Ascending aorta (tissue), 2 donors: ENCODE measurements at regions of chr12 and their contacts with region 1.

Region 1: DNA sequence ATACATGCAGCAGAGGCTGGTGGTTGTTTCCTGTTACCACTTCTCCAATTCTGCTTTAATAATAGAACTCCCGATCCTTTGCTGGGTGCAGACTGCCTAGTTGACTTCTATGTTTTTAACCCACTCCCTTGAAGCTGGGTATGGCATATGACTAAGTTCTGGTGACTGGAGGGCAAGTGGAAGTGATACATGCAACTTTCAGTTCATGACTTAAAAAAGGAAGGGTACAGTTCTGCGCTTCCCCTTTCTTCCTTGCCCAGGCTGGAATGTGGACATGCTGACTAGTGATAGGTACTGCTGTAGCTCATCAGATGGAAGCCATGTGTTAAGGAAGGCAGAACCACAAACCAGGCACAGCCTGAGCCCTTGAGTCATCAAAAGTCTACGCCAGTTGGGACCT is 2.4 kb upstream of the A2M start:
- DNase-seq: peak; percentile 30 to 70
- H3K4me3 ChIP-seq: peak overlapping the region; percentile 34 to 69
- H3K27ac ChIP-seq: peak overlapping the region; percentile 80 to 85
- H3K4me1 ChIP-seq: peaks cover 3 to 32% of the 10 kb centered on the region in 2 donors
- H3K27me3 ChIP-seq: no peaks in the 10 kb centered on the region
- CTCF ChIP-seq: no peak

Region 2: GRCh38 chr12:9149372-9149771 is 31.2 kb after region 1 on chr12:
- intact Hi-C with region 1: no loop called
- DNase-seq: no peak
- H3K4me3 ChIP-seq: no peak overlapping the region
- H3K27ac ChIP-seq: no peak overlapping the region
- H3K4me1 ChIP-seq: no peaks in the 10 kb centered on the region
- H3K27me3 ChIP-seq: no peaks in the 10 kb centered on the region
- CTCF ChIP-seq: no peak

Region 3: GRCh38 chr12:9276990-9277389 is 158.8 kb after region 1 on chr12:
- intact Hi-C with region 1: loop called (anchors 2 kb)
- DNase-seq: no peak
- H3K4me3 ChIP-seq: no peak overlapping the region
- H3K27ac ChIP-seq: no peak overlapping the region
- H3K4me1 ChIP-seq: no peaks in the 10 kb centered on the region
- H3K27me3 ChIP-seq: no peaks in the 10 kb centered on the region
- CTCF ChIP-seq: no peak